ENCODE measurements at regions of chr5 and their contacts with region 1.

Region 1: GRCh38 chr5:141313711-141314110 is 6.9 kb downstream of the TAF7 start:
- DNase-seq: no peak
- ATAC-seq: no peak
- H3K4me3 Mint-ChIP-seq: no peak overlapping the region
- H3K27ac Mint-ChIP-seq: no peak overlapping the region
- H3K4me1 Mint-ChIP-seq: peaks cover 4% of the 10 kb centered on the region
- H3K27me3 Mint-ChIP-seq: no peaks in the 10 kb centered on the region

Region 2: DNA sequence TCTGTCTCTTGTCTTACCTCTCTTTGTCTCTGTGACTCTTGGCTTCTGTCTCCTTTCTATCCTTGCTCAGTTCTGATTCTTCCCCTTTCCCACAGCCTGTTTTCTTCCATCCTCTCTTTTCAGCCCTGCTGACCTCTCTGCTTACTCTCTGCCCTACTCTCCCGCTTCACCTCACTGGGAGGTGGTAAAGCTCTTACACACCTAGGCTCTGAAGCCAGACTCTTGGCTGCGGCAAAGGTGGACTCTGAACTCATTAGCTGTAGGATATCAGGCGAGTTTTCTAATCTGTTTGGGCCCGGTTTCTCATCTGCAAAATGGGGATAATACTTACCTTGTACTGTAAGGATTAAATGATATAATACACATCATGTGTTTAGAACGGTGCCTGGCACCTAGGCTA is 553.4 kb after region 1 on chr5:
- CTCF ChIA-PET with region 1: no interaction called
- POLR2A ChIA-PET with region 1: interaction called, 11 read pairs
- intact Hi-C with region 1: no loop called
- DNase-seq: no peak
- ATAC-seq: no peak
- H3K4me3 Mint-ChIP-seq: no peak overlapping the region
- H3K27ac Mint-ChIP-seq: no peak overlapping the region
- H3K4me1 Mint-ChIP-seq: no peaks in the 10 kb centered on the region
- H3K27me3 Mint-ChIP-seq: peaks cover 5% of the 10 kb centered on the region

Region 3: GRCh38 chr5:142888469-142889085 is 1574.9 kb after region 1 on chr5:
- CTCF ChIA-PET with region 1: no interaction called
- POLR2A ChIA-PET with region 1: no interaction called
- intact Hi-C with region 1: no loop called
- DNase-seq: no peak
- ATAC-seq: no peak
- H3K4me3 Mint-ChIP-seq: no peak overlapping the region
- H3K27ac Mint-ChIP-seq: no peak overlapping the region
- H3K4me1 Mint-ChIP-seq: no peaks in the 10 kb centered on the region
- H3K27me3 Mint-ChIP-seq: no peaks in the 10 kb centered on the region

Measured in activated CD4-positive, alpha-beta T cell treated with anti-CD3 and anti-CD28 coated beads for 36 hours (primary cell).